ENCODE measurements at regions of chrX and their contacts with region 1.

Region 1: GRCh38 chrX:134396174-134396573 is 63.8 kb upstream of the HPRT1 start:
- DNase-seq: peak; percentile 43
- H3K4me3 Mint-ChIP-seq: no peak overlapping the region
- H3K27ac Mint-ChIP-seq: no peak overlapping the region
- H3K4me1 Mint-ChIP-seq: no peaks in the 10 kb centered on the region
- H3K27me3 Mint-ChIP-seq: peaks cover 32% of the 10 kb centered on the region
- CTCF ChIP-seq: peak; percentile 66

Region 2: GRCh38 chrX:134377537-134377936 is 18.6 kb before region 1 on chrX:
- CTCF ChIA-PET with region 1: interaction called, 18 read pairs
- POLR2A ChIA-PET with region 1: interaction called, 4 read pairs
- intact Hi-C with region 1: no loop called
- DNase-seq: peak; percentile 61
- H3K4me3 Mint-ChIP-seq: no peak overlapping the region
- H3K27ac Mint-ChIP-seq: no peak overlapping the region
- H3K4me1 Mint-ChIP-seq: no peaks in the 10 kb centered on the region
- H3K27me3 Mint-ChIP-seq: peaks cover 46% of the 10 kb centered on the region
- CTCF ChIP-seq: peak; percentile 20

Region 3: GRCh38 chrX:134382816-134383215 is 13.4 kb before region 1 on chrX:
- CTCF ChIA-PET with region 1: interaction called, 18 read pairs
- POLR2A ChIA-PET with region 1: interaction called, 5 read pairs
- intact Hi-C with region 1: no loop called
- DNase-seq: no peak
- H3K4me3 Mint-ChIP-seq: no peak overlapping the region
- H3K27ac Mint-ChIP-seq: no peak overlapping the region
- H3K4me1 Mint-ChIP-seq: no peaks in the 10 kb centered on the region
- H3K27me3 Mint-ChIP-seq: peaks cover 49% of the 10 kb centered on the region
- CTCF ChIP-seq: no peak